B cell (primary cell): ENCODE measurements at regions of chr18 and their contacts with region 1.

Region 1: DNA sequence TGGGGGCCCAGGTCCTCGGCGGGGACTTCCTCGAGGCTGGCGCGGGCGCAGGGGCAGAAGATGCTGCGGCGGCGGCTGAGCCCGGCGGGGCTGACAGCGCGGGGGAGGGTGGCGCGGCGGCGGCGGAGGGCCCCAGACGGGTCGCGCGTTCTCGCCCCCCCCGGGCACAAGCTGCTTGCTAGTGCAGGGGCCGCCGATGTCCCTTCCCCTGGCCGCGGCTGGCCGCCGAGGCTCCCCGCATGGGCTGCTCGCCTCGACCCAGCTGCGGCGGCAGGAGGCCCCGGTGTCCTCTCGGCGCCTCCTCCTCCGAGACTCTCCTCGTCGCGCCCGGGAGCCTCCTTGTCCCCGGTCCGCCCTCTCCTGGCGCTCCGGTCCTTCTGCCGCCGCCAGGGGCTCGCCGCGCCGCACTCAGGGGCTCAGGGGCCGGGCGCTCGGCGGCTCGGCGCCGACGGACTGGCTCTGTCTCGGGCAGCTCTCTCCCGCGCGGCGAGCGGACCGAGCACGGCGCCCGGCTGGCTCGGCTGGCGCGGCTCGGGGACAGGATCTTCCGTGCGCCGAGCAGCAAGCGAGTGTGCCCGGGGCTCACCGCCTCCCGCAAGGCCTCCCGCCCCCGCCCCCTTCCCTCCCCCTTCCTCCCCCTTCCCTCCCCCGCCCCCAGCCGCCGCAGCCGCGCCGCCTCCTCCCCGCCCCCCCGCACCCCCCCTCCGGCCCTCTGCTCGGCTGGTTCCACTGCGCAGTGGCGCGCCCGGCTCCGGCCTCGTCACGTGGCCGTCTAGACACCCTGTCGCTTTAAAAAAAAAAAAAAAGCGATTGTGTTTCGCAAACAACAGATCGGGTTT is 902 bp upstream of the SMAD7 start:
- DNase-seq: peak; percentile 91
- ATAC-seq: peak; percentile 46
- H3K4me3 ChIP-seq: peak overlapping the region; percentile 62 to 96 (median 75)
- H3K4me3 Mint-ChIP-seq: peak overlapping the region; percentile 90
- H3K27ac ChIP-seq: peak overlapping the region; percentile 86 to 100
- H3K27ac Mint-ChIP-seq: peak overlapping the region; percentile 99
- H3K4me1 ChIP-seq: peaks cover 24 to 37% of the 10 kb centered on the region in 2 donors
- H3K4me1 Mint-ChIP-seq: peaks cover 29% of the 10 kb centered on the region
- H3K27me3 ChIP-seq: peaks cover 0 to 2% (median 0%) of the 10 kb centered on the region in 4 experiments
- H3K27me3 Mint-ChIP-seq: no peaks in the 10 kb centered on the region
- CTCF ChIP-seq: no peak

Region 2: DNA sequence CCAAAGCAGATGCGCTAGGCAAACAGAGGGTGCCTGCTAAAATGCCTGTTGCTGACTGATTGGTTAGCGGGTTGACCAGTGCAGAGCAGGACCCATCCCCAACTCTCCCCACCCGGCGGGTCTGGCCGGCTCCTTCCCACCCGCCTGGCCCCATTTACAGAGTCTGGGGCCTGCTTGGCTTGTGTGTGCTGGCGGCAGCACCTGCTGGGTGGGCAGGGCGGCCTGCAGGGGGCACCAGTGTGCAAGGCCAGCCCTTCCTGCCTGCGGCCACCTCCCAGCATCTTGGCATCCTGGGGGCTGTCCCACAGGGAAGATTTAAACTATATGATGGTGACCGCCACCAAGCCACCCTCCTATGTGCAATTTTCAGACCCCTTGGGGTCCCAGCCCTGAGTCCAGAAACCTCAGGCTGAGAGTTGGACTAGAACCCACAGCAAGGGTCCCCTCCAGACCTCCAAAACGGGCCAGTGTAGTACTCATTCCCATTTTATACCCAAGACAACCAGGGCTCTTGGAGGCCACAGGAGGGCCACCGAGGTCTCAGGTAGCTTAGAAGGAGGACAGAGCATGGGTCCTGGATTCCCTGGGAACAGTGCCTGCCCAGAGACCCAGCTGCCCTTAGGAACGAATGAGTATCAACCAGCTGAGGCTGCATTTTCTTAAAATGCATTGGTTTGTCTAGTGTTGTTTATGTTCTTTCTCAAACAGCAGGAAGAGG is 174.5 kb before region 1 on chr18:
- CTCF ChIA-PET with region 1: interaction called, 7 read pairs
- POLR2A ChIA-PET with region 1: interaction called, 5 read pairs
- intact Hi-C with region 1: loop called (anchors 2 kb)
- DNase-seq: peak; percentile 70
- ATAC-seq: peak; percentile 79
- H3K4me3 ChIP-seq: no peak overlapping the region
- H3K4me3 Mint-ChIP-seq: no peak overlapping the region
- H3K27ac ChIP-seq: no peak overlapping the region
- H3K27ac Mint-ChIP-seq: no peak overlapping the region
- H3K4me1 ChIP-seq: peaks cover 16 to 32% of the 10 kb centered on the region in 2 donors
- H3K4me1 Mint-ChIP-seq: peaks cover 27% of the 10 kb centered on the region
- H3K27me3 ChIP-seq: no peaks in the 10 kb centered on the region
- H3K27me3 Mint-ChIP-seq: no peaks in the 10 kb centered on the region
- CTCF ChIP-seq: peak; percentile 93

Region 3: GRCh38 chr18:48868468-48869466 is 82.9 kb before region 1 on chr18:
- CTCF ChIA-PET with region 1: interaction called, 4 read pairs
- POLR2A ChIA-PET with region 1: interaction called, 7 read pairs
- intact Hi-C with region 1: loop called (anchors 2 kb)
- DNase-seq: peak; percentile 94
- ATAC-seq: peak; percentile 94
- H3K4me3 ChIP-seq: no peak overlapping the region
- H3K4me3 Mint-ChIP-seq: peak overlapping the region; percentile 51
- H3K27ac ChIP-seq: peak overlapping the region; percentile 67 to 78
- H3K27ac Mint-ChIP-seq: peak overlapping the region; percentile 94
- H3K4me1 ChIP-seq: peaks cover 17 to 26% of the 10 kb centered on the region in 2 donors
- H3K4me1 Mint-ChIP-seq: peaks cover 17% of the 10 kb centered on the region
- H3K27me3 ChIP-seq: no peaks in the 10 kb centered on the region
- H3K27me3 Mint-ChIP-seq: no peaks in the 10 kb centered on the region
- CTCF ChIP-seq: no peak

Region 4: GRCh38 chr18:48913201-48913600 is 38.5 kb before region 1 on chr18:
- CTCF ChIA-PET with region 1: interaction called, 8 read pairs
- POLR2A ChIA-PET with region 1: interaction called, 7 read pairs
- intact Hi-C with region 1: loop called (anchors 5 kb)
- DNase-seq: peak; percentile 37
- ATAC-seq: peak; percentile 63
- H3K4me3 ChIP-seq: no peak overlapping the region
- H3K4me3 Mint-ChIP-seq: no peak overlapping the region
- H3K27ac ChIP-seq: no peak overlapping the region
- H3K27ac Mint-ChIP-seq: no peak overlapping the region
- H3K4me1 ChIP-seq: peaks cover 0 to 6% of the 10 kb centered on the region in 2 donors
- H3K4me1 Mint-ChIP-seq: peaks cover 8% of the 10 kb centered on the region
- H3K27me3 ChIP-seq: no peaks in the 10 kb centered on the region
- H3K27me3 Mint-ChIP-seq: no peaks in the 10 kb centered on the region
- CTCF ChIP-seq: peak; percentile 16

Region 5: GRCh38 chr18:48940854-48941611 is 10.6 kb before region 1 on chr18:
- CTCF ChIA-PET with region 1: interaction called, 11 read pairs
- POLR2A ChIA-PET with region 1: interaction called, 22 read pairs
- intact Hi-C with region 1: loop called (anchors 1 kb)
- DNase-seq: peak; percentile 92
- ATAC-seq: peak; percentile 82
- H3K4me3 ChIP-seq: peak overlapping the region in 4 of 5 experiments; percentile 28 to 52 (median 38)
- H3K4me3 Mint-ChIP-seq: peak overlapping the region; percentile 79
- H3K27ac ChIP-seq: peak overlapping the region; percentile 71 to 94
- H3K27ac Mint-ChIP-seq: peak overlapping the region; percentile 94
- H3K4me1 ChIP-seq: peaks cover 33 to 55% of the 10 kb centered on the region in 2 donors
- H3K4me1 Mint-ChIP-seq: peaks cover 74% of the 10 kb centered on the region
- H3K27me3 ChIP-seq: no peaks in the 10 kb centered on the region
- H3K27me3 Mint-ChIP-seq: no peaks in the 10 kb centered on the region
- CTCF ChIP-seq: no peak

Region 6: DNA sequence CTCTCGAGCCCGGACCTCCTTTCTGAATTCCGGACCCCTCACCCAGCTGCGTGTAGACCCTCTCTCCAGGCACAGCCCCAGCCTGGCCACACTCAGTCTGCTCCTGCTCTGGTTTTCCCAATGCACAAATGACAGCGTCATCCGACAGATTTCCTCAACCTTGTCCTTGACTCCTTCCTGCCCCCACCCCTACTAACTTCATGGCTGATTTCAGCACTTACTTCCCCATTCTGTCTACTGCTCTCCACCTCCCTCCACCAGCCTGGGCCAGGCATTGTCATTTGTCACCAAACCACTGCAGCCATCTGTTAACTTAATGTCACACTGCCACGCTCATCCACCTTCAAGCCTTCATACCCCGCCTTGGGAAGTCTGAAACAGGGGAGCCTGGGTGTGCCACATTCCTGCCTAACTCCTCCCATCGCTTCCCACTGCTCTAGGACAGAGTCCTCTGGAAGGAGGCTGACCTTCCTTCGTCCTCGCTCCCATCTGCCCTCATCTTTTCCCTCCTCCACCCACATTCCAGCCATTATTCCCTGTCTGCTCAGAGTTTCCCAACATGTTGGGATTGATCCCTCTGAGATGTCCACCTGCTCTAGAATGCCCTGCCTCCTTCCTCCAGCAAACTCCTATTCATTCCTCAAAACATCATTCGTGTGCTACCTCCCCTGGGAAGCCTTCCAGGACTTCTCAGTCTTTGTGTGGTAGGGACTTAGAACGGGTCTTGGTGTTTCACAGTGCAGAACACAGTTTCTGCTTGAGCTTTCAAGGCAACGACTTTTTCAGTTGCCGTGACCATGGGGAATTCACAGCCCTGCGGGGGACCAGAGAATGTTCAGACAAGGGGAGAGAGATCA is 41.3 kb after region 1 on chr18:
- CTCF ChIA-PET with region 1: no interaction called
- POLR2A ChIA-PET with region 1: interaction called, 5 read pairs
- intact Hi-C with region 1: loop called (anchors 2 kb)
- DNase-seq: peak; percentile 87
- ATAC-seq: peak; percentile 97
- H3K4me3 ChIP-seq: peak overlapping the region in 1 of 5 experiments; percentile 27
- H3K4me3 Mint-ChIP-seq: peak overlapping the region; percentile 46
- H3K27ac ChIP-seq: no peak overlapping the region
- H3K27ac Mint-ChIP-seq: peak overlapping the region; percentile 46
- H3K4me1 ChIP-seq: peaks cover 18 to 20% of the 10 kb centered on the region in 2 donors
- H3K4me1 Mint-ChIP-seq: peaks cover 18% of the 10 kb centered on the region
- H3K27me3 ChIP-seq: no peaks in the 10 kb centered on the region
- H3K27me3 Mint-ChIP-seq: no peaks in the 10 kb centered on the region
- CTCF ChIP-seq: no peak

Region 7: GRCh38 chr18:49059028-49059834 is 107.6 kb after region 1 on chr18:
- CTCF ChIA-PET with region 1: no interaction called
- POLR2A ChIA-PET with region 1: no interaction called
- intact Hi-C with region 1: no loop called
- DNase-seq: no peak
- ATAC-seq: no peak
- H3K4me3 ChIP-seq: no peak overlapping the region
- H3K4me3 Mint-ChIP-seq: no peak overlapping the region
- H3K27ac ChIP-seq: no peak overlapping the region
- H3K27ac Mint-ChIP-seq: no peak overlapping the region
- H3K4me1 ChIP-seq: peaks cover 18 to 31% of the 10 kb centered on the region in 2 donors
- H3K4me1 Mint-ChIP-seq: peaks cover 44% of the 10 kb centered on the region
- H3K27me3 ChIP-seq: no peaks in the 10 kb centered on the region
- H3K27me3 Mint-ChIP-seq: no peaks in the 10 kb centered on the region
- CTCF ChIP-seq: no peak

Region 8: GRCh38 chr18:50287441-50288347 is 1336.0 kb after region 1 on chr18 and contains the start of gene CXXC1:
- CTCF ChIA-PET with region 1: no interaction called
- POLR2A ChIA-PET with region 1: no interaction called
- intact Hi-C with region 1: loop called (anchors 5 kb)
- DNase-seq: peak; percentile 99
- ATAC-seq: peak; percentile 91
- H3K4me3 ChIP-seq: peak within 1 kb of the TSS; percentile 64 to 97 (median 90)
- H3K4me3 Mint-ChIP-seq: peak within 1 kb of the TSS; percentile 98
- H3K27ac ChIP-seq: peak within 1 kb of the TSS; percentile 93
- H3K27ac Mint-ChIP-seq: peak within 1 kb of the TSS; percentile 94
- H3K4me1 ChIP-seq: peaks cover 8 to 13% of the 10 kb centered on the region in 2 donors
- H3K4me1 Mint-ChIP-seq: peaks cover 34% of the 10 kb centered on the region
- H3K27me3 ChIP-seq: no peaks in the 10 kb centered on the region
- H3K27me3 Mint-ChIP-seq: no peaks in the 10 kb centered on the region
- CTCF ChIP-seq: peak; percentile 42
- total RNA-seq, gene CXXC1: 136 and 157 TPM in 2 replicates